Endothelial cell of umbilical vein (primary cell): ENCODE measurements at regions of chr3 and their contacts with region 1.

Region 1: DNA sequence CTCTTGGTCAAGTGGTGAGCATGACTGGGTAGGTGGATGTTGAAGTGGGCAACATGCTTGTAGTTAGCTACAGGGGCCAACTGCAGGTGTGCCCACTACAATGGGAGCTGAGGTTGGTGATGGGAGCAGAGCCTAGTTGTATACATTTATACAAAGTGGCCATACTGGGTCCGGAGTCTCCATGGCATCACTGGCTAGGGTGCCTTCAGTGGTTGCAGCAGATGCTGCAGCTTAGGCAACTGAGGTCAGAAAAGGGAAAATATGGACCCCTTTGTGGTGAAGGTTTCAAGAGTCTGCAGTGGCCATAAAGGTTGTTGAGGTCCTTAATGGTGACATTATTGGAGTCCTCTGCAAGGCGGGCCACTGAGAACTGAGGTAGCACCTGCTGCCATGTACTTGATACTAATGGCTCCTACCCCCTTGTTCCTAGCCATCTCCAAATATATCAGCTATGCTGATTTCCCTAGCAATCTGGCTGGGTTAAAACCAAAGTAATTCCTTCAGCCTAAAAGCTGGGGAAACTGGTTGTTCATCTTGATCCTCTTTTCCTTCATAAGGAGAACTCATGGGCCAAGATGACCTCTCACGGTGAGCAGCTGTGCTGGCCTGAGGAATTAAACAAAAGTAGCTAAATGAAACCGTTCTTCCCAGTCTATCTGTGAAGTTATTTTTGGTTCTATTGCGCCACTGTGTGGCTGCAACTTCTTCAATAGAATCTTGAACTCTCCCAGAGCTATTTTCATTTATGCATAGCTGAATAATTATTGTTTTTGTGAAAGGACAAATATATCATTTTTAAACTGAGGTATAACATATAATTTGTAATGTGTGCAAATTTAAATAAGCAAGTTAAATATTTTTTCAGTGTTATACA is 76.0 kb upstream of the PLSCR4 start:
- DNase-seq: peak; percentile 85
- H3K4me3 ChIP-seq: no peak overlapping the region
- H3K27ac ChIP-seq: no peak overlapping the region
- H3K4me1 ChIP-seq: peaks cover 2% of the 10 kb centered on the region
- H3K27me3 ChIP-seq: no peaks in the 10 kb centered on the region
- CTCF ChIP-seq: peak; percentile 49 to 52
- POLR2A ChIP-seq: no peak

Region 2: GRCh38 chr3:145776782-145777408 is 550.0 kb before region 1 on chr3:
- CTCF ChIA-PET with region 1: interaction called, 40 read pairs
- POLR2A ChIA-PET with region 1: no interaction called
- dilution Hi-C with region 1: no loop called
- intact Hi-C with region 1: loop called (anchors 1 kb)
- DNase-seq: peak; percentile 80
- H3K4me3 ChIP-seq: no peak overlapping the region
- H3K27ac ChIP-seq: no peak overlapping the region
- H3K4me1 ChIP-seq: no peaks in the 10 kb centered on the region
- H3K27me3 ChIP-seq: peaks cover 0 to 3% of the 10 kb centered on the region in 2 experiments
- CTCF ChIP-seq: peak; percentile 53 to 62
- POLR2A ChIP-seq: no peak

Region 3: DNA sequence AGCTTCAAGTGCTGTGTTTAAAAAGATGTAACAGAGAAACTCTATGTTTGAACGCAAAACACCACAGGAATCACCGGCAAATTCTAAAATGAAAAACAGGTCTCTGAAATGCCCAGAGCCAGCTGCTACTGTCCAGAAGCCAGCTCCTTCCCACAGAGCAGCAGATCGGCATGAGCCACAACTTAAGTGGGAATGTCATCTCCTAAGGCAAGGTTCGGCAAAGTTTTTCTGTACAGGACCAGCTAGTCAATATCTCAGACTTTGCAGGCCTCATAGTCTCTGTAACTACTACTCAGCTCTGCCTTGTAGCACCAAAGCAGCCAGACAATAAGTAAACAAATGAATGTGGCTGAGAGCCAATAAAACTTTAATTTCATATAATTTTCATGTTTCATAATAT is 170.8 kb before region 1 on chr3:
- CTCF ChIA-PET with region 1: interaction called, 16 read pairs
- POLR2A ChIA-PET with region 1: interaction called, 3 read pairs
- dilution Hi-C with region 1: no loop called
- intact Hi-C with region 1: loop called (anchors 1 kb)
- DNase-seq: peak; percentile 54
- H3K4me3 ChIP-seq: peak overlapping the region in 2 of 3 experiments; percentile 16 to 94
- H3K27ac ChIP-seq: peak overlapping the region; percentile 90
- H3K4me1 ChIP-seq: peaks cover 33% of the 10 kb centered on the region
- H3K27me3 ChIP-seq: no peaks in the 10 kb centered on the region
- CTCF ChIP-seq: no peak
- POLR2A ChIP-seq: peak; percentile 26

Region 4: DNA sequence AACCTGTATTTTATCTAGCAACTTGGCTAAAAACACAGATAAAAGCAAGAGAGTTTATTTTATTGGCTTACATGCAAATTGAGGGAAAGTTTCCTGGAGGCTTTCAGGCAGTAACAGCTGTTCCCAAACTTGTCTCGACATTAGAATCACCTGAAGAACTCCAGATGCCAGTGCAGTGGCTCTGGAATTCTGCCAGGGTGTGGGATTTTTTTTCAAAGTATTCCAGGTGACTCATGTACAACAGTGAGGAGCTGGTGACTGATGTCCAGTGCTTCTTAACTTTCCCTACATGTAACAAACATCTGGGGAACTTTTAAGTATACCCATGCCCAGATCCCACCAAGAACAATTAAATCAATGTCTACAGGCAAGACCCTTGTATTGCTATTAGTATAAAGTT is 142.3 kb before region 1 on chr3:
- CTCF ChIA-PET with region 1: interaction called, 347 read pairs
- POLR2A ChIA-PET with region 1: interaction called, 7 read pairs
- dilution Hi-C with region 1: no loop called
- intact Hi-C with region 1: loop called (anchors 1 kb)
- DNase-seq: no peak
- H3K4me3 ChIP-seq: no peak overlapping the region
- H3K27ac ChIP-seq: no peak overlapping the region
- H3K4me1 ChIP-seq: peaks cover 9% of the 10 kb centered on the region
- H3K27me3 ChIP-seq: no peaks in the 10 kb centered on the region
- CTCF ChIP-seq: no peak
- POLR2A ChIP-seq: no peak

Region 5: DNA sequence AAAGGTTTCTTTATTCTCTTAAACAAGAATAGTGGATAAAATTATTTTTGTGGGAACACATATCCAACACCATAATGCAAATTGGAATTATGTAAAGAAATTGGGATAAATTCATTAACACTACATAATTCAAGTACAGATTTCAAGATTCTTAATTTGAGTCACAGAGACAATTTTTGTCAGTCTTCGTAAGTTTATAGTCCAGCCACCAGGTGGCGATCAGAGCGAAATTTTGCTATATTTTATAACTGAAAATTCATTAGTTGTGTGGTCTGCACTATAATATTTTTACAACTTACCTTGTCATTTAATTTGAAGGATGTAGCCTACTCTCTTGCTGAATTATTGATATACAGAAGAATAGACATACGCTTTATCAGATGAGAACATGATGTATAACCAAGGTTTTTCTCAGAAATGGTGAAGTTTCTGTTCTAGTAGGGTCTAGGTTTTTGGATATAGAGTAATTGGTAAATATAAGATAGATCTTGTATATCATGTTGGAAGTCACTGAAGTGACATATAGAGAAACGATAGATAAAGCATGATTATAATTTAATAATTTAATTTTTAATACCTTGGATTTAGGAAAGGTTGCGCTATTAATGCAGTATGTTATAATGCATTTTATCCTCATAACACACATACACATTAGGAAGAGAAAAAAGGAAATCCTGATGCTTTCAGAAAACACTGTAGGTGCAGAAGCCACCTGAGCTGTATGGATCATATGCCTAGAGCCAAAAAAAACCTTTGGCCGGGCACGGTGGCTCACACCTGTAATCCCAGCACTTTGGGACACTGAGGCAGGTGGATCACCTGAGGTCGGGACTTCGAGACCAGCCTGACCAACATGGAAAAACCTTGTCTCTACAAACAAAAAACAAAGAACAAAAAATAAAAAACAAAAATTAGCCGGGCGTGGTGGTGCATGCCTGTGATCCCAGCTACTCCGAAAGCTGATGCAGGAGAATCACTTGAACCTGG is 107.7 kb before region 1 on chr3:
- CTCF ChIA-PET with region 1: interaction called, 79 read pairs
- POLR2A ChIA-PET with region 1: interaction called, 5 read pairs
- dilution Hi-C with region 1: no loop called
- intact Hi-C with region 1: loop called (anchors 1 kb)
- DNase-seq: peak; percentile 71
- H3K4me3 ChIP-seq: no peak overlapping the region
- H3K27ac ChIP-seq: peak overlapping the region; percentile 10
- H3K4me1 ChIP-seq: peaks cover 50% of the 10 kb centered on the region
- H3K27me3 ChIP-seq: no peaks in the 10 kb centered on the region
- CTCF ChIP-seq: peak; percentile 37 to 39
- POLR2A ChIP-seq: no peak

Region 6: DNA sequence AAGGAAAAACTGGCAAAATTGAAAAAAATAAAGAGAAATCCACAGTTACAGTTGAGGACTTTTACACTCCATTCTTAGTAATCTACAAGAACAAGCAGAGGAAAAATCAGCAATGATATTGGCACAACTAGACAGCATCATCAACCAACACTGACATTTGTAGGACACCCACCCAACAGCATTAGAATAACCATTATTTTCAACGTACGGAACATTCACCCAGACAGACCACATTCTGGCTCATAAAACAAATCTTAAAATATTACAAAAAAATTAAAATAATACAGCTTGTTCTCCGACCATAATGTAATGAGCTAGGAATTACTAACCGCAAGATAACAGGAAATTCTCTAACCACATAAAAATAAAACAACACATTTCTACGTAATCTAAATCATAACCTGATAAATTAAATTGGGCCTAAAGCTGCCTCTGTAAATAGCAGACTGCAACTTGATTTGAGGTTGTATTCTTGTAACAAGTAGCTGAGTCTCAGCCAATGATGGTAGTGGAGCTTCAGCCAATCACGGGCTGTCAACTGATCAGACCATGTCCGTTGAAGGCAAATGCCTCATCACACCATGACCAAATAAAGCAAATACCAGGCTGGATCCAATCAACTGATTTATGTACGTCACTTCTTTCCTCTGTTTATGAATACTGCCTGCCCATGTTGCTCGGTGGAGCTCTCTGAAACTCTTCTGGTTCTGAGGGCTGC is 85.2 kb before region 1 on chr3:
- CTCF ChIA-PET with region 1: interaction called, 65 read pairs
- POLR2A ChIA-PET with region 1: no interaction called
- dilution Hi-C with region 1: no loop called
- intact Hi-C with region 1: no loop called
- DNase-seq: peak; percentile 59
- H3K4me3 ChIP-seq: no peak overlapping the region
- H3K27ac ChIP-seq: peak overlapping the region; percentile 71
- H3K4me1 ChIP-seq: peaks cover 13% of the 10 kb centered on the region
- H3K27me3 ChIP-seq: no peaks in the 10 kb centered on the region
- CTCF ChIP-seq: no peak
- POLR2A ChIP-seq: peak; percentile 29

Region 7: GRCh38 chr3:146313411-146314111 is 13.3 kb before region 1 on chr3:
- CTCF ChIA-PET with region 1: interaction called, 46 read pairs
- POLR2A ChIA-PET with region 1: interaction called, 6 read pairs
- dilution Hi-C with region 1: no loop called
- intact Hi-C with region 1: loop called (anchors 1 kb)
- DNase-seq: peak; percentile 91
- H3K4me3 ChIP-seq: no peak overlapping the region
- H3K27ac ChIP-seq: peak overlapping the region; percentile 94
- H3K4me1 ChIP-seq: peaks cover 42% of the 10 kb centered on the region
- H3K27me3 ChIP-seq: no peaks in the 10 kb centered on the region
- CTCF ChIP-seq: no peak
- POLR2A ChIP-seq: peak; percentile 50